Caco-2 (cell line): ENCODE measurements at regions of chr10 and their contacts with region 1.

Region 1: GRCh38 chr10:52755297-52756062 is 17.1 kb downstream of the MBL2 start:
- DNase-seq: peak in 1 of 2 experiments; percentile 54
- H3K4me3 ChIP-seq: no peak overlapping the region
- H3K4me3 Mint-ChIP-seq: no peak overlapping the region
- H3K27ac Mint-ChIP-seq: no peak overlapping the region
- H3K4me1 ChIP-seq: 0 out of 2 replicates have a peak, but pooled peaks cover 8% of the 10 kb centered on the region
- H3K4me1 Mint-ChIP-seq: no peaks in the 10 kb centered on the region
- H3K27me3 ChIP-seq: no peaks in the 10 kb centered on the region
- H3K27me3 Mint-ChIP-seq: no peaks in the 10 kb centered on the region
- CTCF ChIP-seq: no peak

Region 2: GRCh38 chr10:52774600-52775106 is 19.2 kb after region 1 on chr10:
- CTCF ChIA-PET with region 1: no interaction called
- POLR2A ChIA-PET with region 1: no interaction called
- intact Hi-C with region 1: loop called (anchors 1 kb)
- DNase-seq: peak; percentile 75 to 87
- H3K4me3 ChIP-seq: no peak overlapping the region
- H3K4me3 Mint-ChIP-seq: peak overlapping the region; percentile 30
- H3K27ac Mint-ChIP-seq: peak overlapping the region; percentile 36
- H3K4me1 ChIP-seq: peaks cover 43% of the 10 kb centered on the region
- H3K4me1 Mint-ChIP-seq: peaks cover 56% of the 10 kb centered on the region
- H3K27me3 ChIP-seq: no peaks in the 10 kb centered on the region
- H3K27me3 Mint-ChIP-seq: no peaks in the 10 kb centered on the region
- CTCF ChIP-seq: no peak

Region 3: GRCh38 chr10:52951824-52952223 is 196.3 kb after region 1 on chr10:
- CTCF ChIA-PET with region 1: no interaction called
- POLR2A ChIA-PET with region 1: no interaction called
- intact Hi-C with region 1: no loop called
- DNase-seq: peak; percentile 83 to 84
- H3K4me3 ChIP-seq: no peak overlapping the region
- H3K4me3 Mint-ChIP-seq: no peak overlapping the region
- H3K27ac Mint-ChIP-seq: peak overlapping the region; percentile 53
- H3K4me1 ChIP-seq: peaks cover 25% of the 10 kb centered on the region
- H3K4me1 Mint-ChIP-seq: peaks cover 25% of the 10 kb centered on the region
- H3K27me3 ChIP-seq: no peaks in the 10 kb centered on the region
- H3K27me3 Mint-ChIP-seq: no peaks in the 10 kb centered on the region
- CTCF ChIP-seq: peak; percentile 71 to 78

Region 4: DNA sequence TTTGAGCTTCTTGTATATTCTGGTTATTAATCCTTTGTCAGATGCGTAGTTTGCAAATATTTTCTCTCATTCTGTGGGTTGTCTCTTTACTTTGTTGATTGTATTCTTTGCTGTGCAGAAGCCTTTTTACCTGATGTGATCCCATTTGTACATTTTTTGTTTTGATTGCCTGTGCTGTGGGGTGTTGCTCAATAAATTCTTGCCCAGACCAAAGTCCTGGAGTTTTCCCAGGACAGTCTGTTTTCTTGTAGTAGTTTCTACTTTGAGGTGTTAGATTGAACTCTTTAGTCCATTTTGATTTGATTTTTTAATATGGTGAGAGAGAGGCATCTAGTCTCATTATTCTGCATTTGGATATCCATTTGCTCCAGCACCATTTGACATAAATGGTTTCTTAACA is 605.8 kb after region 1 on chr10:
- CTCF ChIA-PET with region 1: no interaction called
- POLR2A ChIA-PET with region 1: no interaction called
- intact Hi-C with region 1: no loop called
- DNase-seq: no peak
- H3K4me3 ChIP-seq: no peak overlapping the region
- H3K4me3 Mint-ChIP-seq: no peak overlapping the region
- H3K27ac Mint-ChIP-seq: no peak overlapping the region
- H3K4me1 ChIP-seq: no peaks in the 10 kb centered on the region
- H3K4me1 Mint-ChIP-seq: no peaks in the 10 kb centered on the region
- H3K27me3 ChIP-seq: no peaks in the 10 kb centered on the region
- H3K27me3 Mint-ChIP-seq: no peaks in the 10 kb centered on the region
- CTCF ChIP-seq: no peak